Lower lobe of right lung (tissue), 2 donors: ENCODE measurements at regions of chr13 and their contacts with region 1.

Region 1: DNA sequence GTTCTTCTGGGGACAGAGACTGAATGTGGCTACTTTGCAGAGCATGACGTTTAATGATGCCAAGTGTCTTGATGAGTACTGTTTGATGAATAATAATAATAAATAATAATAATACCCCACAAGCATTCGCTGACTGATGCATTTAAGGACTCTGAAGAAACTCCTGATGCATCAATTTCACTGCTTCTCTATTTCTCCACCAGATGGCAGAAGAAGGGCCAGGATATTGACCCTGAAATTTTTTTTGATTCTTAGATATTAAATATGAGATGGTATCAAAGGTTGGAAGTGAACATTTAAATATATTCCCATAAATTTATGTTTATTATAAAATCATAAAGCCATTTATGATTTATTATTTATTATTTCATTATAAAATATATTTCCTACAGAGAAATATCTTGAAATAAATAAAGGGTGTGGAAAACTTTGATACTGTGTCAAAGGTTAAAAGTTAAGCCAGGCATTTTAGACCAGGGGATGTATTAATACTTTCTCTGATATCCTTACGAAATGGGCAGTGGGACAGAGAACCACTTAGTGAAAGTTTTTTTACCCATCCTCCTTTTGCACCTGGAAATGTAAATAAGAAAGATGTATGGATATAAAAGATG is 170.9 kb downstream of the LACC1 start:
- DNase-seq: no peak
- ATAC-seq: peak in 1 of 2 donors; percentile 58
- H3K4me3 ChIP-seq: no peak overlapping the region
- H3K27ac ChIP-seq: no peak overlapping the region
- H3K4me1 ChIP-seq: peaks cover 27% of the 10 kb centered on the region
- H3K27me3 ChIP-seq: no peaks in the 10 kb centered on the region
- CTCF ChIP-seq: peak; percentile 87

Region 2: DNA sequence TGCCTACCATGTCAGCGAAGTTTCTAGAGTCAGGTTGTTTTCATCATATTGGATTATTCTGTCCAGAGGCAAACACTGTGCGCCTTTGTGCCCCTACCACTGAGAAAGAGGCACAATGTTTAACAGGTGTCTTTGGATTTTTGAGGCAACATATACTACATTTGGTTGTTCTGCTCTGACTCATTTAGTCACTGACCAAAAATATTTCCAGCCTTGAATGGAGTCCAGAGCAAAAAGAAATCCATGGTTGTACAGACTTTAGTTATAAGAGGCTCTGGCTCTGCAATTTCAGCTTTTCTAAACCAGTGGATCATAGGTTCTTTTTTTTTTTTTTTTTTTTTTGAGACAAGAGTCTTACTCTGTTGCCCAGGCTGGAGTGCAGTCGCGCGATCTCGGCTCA is 135.1 kb before region 1 on chr13:
- intact Hi-C with region 1: loop called (anchors 10 kb)
- DNase-seq: no peak
- ATAC-seq: no peak
- H3K4me3 ChIP-seq: no peak overlapping the region
- H3K27ac ChIP-seq: no peak overlapping the region
- H3K4me1 ChIP-seq: no peaks in the 10 kb centered on the region
- H3K27me3 ChIP-seq: no peaks in the 10 kb centered on the region
- CTCF ChIP-seq: no peak

Region 3: DNA sequence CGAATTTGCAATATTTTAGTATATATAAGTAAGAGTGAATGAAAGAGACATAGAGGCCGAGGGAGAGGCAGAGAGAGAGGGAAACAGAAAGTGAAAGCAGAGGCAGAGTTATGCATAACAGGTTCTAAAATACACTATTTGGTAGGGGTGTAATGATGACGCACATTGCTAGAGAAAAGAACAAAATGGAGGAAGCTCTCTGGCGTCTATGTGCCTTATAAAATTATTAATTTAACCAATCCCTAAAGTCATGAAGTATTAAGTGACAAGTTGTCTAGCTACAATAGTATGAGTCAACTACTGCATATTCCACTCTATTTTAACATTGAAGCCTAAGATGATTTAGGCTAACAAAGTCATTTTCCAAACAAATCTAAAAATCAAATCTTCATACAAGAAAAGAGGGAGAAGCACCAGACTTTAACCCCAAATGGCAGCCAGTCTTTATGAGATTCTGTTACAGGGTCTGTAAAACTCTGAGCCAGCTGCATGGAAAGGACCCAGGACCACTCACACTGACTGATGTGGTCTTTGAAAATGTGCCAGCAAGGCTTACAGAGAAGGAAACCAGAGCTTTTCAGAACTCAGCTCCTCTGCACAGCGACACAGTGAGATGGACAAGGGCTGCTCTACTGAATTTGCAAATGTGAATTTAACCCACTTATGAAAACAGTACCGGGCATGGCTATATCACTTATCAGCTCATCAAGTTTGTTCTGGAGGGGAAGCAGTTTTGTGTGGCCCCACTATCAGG is 224.1 kb after region 1 on chr13:
- intact Hi-C with region 1: no loop called
- DNase-seq: no peak
- ATAC-seq: peak; percentile 90 to 94
- H3K4me3 ChIP-seq: peak overlapping the region; percentile 20
- H3K27ac ChIP-seq: peak overlapping the region; percentile 77
- H3K4me1 ChIP-seq: peaks cover 50% of the 10 kb centered on the region
- H3K27me3 ChIP-seq: no peaks in the 10 kb centered on the region
- CTCF ChIP-seq: no peak

Region 4: DNA sequence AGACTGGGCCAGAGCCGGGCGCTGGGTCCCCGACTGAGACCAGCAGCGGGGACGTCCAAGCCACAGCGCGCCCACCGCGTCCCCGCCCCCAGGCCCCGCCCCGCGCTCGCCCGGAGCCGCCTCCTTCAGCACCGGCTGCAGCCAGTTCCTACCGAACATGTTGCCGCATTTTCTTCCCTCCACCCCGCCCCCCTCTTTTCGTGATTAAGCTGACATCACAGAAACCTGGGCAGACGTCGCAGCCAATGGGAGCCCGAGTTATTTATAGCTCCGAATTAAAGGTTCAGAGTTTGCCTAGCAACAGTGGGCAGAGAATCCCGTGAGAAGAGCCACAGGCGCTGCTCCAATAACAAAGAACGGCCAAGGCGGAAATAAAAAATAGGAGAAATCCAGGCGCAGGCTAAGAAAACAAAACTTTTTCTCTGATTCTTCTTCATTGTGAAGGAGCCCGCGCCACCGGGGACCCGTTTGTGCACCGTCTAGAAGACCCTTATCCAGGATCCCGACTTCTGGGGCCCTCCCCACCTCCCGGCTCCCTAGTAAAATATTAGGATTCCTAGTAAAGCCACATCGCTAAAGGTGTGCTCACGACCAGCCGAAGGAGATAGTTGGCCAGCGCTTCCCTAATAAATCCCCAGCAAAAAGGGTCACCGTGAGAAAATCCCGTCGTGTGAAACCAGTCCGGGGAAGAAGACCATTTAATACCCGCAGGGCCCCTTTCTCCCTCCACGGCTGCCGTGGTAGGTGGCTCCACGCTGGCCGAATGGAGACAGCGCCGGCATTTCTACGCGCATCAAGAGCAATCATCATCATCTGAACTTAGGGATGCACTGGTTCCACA is 384.8 kb after region 1 on chr13:
- intact Hi-C with region 1: loop called (anchors 5 kb)
- DNase-seq: peak; percentile 95
- ATAC-seq: peak; percentile 78 to 91
- H3K4me3 ChIP-seq: peak overlapping the region; percentile 81
- H3K27ac ChIP-seq: peak overlapping the region; percentile 94
- H3K4me1 ChIP-seq: peaks cover 25% of the 10 kb centered on the region
- H3K27me3 ChIP-seq: no peaks in the 10 kb centered on the region
- CTCF ChIP-seq: no peak

Region 5: GRCh38 chr13:44498969-44499368 is 448.4 kb after region 1 on chr13:
- intact Hi-C with region 1: no loop called
- DNase-seq: no peak
- ATAC-seq: no peak
- H3K4me3 ChIP-seq: no peak overlapping the region
- H3K27ac ChIP-seq: no peak overlapping the region
- H3K4me1 ChIP-seq: no peaks in the 10 kb centered on the region
- H3K27me3 ChIP-seq: no peaks in the 10 kb centered on the region
- CTCF ChIP-seq: no peak